Heart left ventricle (tissue), 16 donors: ENCODE measurements at regions of chr1 and their contacts with region 1.

Region 1: GRCh38 chr1:34796990-34797389 is 4.2 kb downstream of the GJA4 start:
- DNase-seq: no peak
- ATAC-seq: no peak
- H3K4me3 ChIP-seq: peak overlapping the region in 11 of 12 donors; percentile 45 to 90 (median 67)
- H3K27ac ChIP-seq: peak overlapping the region in 10 of 12 donors; percentile 9 to 96 (median 80)
- H3K4me1 ChIP-seq: peaks cover 0 to 29% (median 7%) of the 10 kb centered on the region in 12 donors
- H3K27me3 ChIP-seq: peaks cover 0 to 7% (median 0%) of the 10 kb centered on the region in 9 donors
- CTCF ChIP-seq: no peak
- POLR2A ChIP-seq: no peak

Region 2: GRCh38 chr1:34590211-34590623 is 206.8 kb before region 1 on chr1:
- intact Hi-C with region 1: no loop called
- DNase-seq: no peak
- ATAC-seq: no peak
- H3K4me3 ChIP-seq: no peak overlapping the region
- H3K27ac ChIP-seq: no peak overlapping the region
- H3K4me1 ChIP-seq: no peaks in the 10 kb centered on the region
- H3K27me3 ChIP-seq: peaks cover 0 to 29% (median 0%) of the 10 kb centered on the region in 9 donors
- CTCF ChIP-seq: no peak
- POLR2A ChIP-seq: no peak

Region 3: DNA sequence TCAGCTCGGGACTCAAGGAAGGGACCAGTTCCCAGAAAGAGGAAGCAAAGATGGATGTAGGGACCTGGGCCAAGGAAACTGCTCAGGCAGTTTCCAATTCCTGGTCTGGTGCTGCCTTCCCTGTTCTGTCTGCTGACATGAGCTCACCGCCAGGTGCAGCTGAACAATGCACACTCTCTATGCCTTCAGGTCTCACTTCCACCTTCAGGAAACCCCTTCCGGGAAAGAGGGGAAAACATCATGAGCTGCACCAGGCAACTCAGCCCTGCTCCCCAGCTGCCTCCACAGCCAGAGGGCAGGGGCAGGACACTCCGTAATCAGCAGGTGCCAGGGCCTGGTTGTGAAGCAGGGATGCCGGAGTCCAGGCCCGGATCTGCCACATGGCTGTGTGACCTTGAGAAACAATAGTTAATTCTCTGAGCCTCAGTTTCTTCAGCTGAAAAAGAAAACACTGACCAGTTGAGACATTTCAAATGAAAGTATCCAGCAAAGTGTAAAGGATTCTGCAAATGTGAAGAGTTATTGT is 34.8 kb after region 1 on chr1:
- intact Hi-C with region 1: loop called in 2 of 10 experiments (anchors 5 kb)
- DNase-seq: no peak
- ATAC-seq: no peak
- H3K4me3 ChIP-seq: no peak overlapping the region
- H3K27ac ChIP-seq: peak overlapping the region in 4 of 12 donors; percentile 6 to 43 (median 32)
- H3K4me1 ChIP-seq: peaks cover 3 to 68% (median 17%) of the 10 kb centered on the region in 12 donors
- H3K27me3 ChIP-seq: no peaks in the 10 kb centered on the region
- CTCF ChIP-seq: no peak
- POLR2A ChIP-seq: no peak

Region 4: DNA sequence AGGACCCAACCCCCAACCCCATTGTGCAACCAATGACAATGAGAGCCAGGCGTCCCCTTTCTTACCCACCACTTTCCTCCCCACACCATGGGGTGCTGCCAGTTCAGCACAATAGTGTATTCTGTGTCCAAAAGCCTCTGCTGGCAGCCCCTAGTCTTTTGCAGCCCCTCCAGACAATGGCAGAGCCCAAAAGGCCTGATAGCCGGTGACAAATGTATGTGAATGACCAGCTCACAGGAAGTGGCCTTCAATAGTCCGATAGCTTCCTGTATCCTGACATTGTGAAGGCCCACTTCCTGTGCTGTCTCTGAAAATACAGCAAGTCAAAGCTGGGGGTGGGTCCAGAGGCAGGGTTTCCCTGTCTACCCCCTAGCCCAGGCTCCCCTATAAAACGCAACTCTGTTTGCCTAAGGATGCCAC is 46.0 kb after region 1 on chr1:
- intact Hi-C with region 1: loop called in 2 of 10 experiments (anchors 2 to 5 kb)
- DNase-seq: peak in 3 of 5 donors; percentile 34 to 67 (median 50)
- ATAC-seq: peak; percentile 21 to 76 (median 52)
- H3K4me3 ChIP-seq: no peak overlapping the region
- H3K27ac ChIP-seq: peak overlapping the region; percentile 66 to 88 (median 77)
- H3K4me1 ChIP-seq: peaks cover 0 to 80% (median 45%) of the 10 kb centered on the region in 12 donors
- H3K27me3 ChIP-seq: no peaks in the 10 kb centered on the region
- CTCF ChIP-seq: no peak
- POLR2A ChIP-seq: no peak

Region 5: DNA sequence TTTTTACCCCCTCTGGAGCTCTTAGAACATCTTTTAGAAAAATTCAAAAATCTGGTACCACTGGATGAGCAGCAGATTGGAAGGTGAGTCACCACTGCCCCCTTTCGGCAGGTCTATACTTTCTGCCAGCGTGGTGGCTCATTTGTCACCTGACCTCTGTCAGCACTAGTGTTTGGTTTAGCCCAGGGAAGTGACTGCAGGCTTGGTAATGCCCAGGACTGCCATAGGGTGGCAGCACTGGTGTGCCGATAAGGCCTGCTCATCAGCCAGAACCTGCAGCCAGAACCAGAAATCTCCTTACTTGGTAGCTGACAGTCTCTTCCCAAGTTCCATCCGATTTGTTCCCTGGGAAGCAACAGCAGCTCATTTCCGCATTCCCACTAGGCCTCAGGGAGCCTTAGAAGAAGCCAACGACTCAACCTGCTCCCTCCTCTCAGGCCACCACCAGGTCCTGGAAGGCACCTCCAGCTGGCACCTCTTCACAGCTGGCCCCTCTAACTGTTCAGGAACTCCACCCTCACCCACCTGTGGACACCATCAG is 55.8 kb after region 1 on chr1:
- intact Hi-C with region 1: loop called in 1 of 10 experiments (anchors 2 kb)
- DNase-seq: peak; percentile 86 to 90 (median 88)
- ATAC-seq: peak; percentile 83 to 95 (median 94)
- H3K4me3 ChIP-seq: no peak overlapping the region
- H3K27ac ChIP-seq: peak overlapping the region in 10 of 12 donors; percentile 1 to 77 (median 56)
- H3K4me1 ChIP-seq: peaks cover 0 to 57% (median 32%) of the 10 kb centered on the region in 12 donors
- H3K27me3 ChIP-seq: no peaks in the 10 kb centered on the region
- CTCF ChIP-seq: peak; percentile 92 to 98 (median 97)
- POLR2A ChIP-seq: peak in 1 of 2 donors; percentile 12